Panc1 (cell line): ENCODE measurements at regions of chr6 and their contacts with region 1.

Region 1: GRCh38 chr6:165135889-165136288 is 173.5 kb downstream of the C6orf118 start:
- DNase-seq: no peak
- ATAC-seq: no peak
- H3K4me3 ChIP-seq: no peak overlapping the region
- H3K27ac ChIP-seq: no peak overlapping the region
- H3K4me1 ChIP-seq: no peaks in the 10 kb centered on the region
- H3K27me3 ChIP-seq: no peaks in the 10 kb centered on the region
- CTCF ChIP-seq: no peak

Region 2: GRCh38 chr6:165117121-165117520 is 18.8 kb before region 1 on chr6:
- CTCF ChIA-PET with region 1: interaction called, 11 read pairs
- POLR2A ChIA-PET with region 1: no interaction called
- in situ Hi-C with region 1: no loop called
- intact Hi-C with region 1: no loop called
- DNase-seq: no peak
- ATAC-seq: no peak
- H3K4me3 ChIP-seq: no peak overlapping the region
- H3K27ac ChIP-seq: no peak overlapping the region
- H3K4me1 ChIP-seq: no peaks in the 10 kb centered on the region
- H3K27me3 ChIP-seq: no peaks in the 10 kb centered on the region
- CTCF ChIP-seq: no peak

Region 3: GRCh38 chr6:165191461-165191860 is 55.6 kb after region 1 on chr6:
- CTCF ChIA-PET with region 1: no interaction called
- POLR2A ChIA-PET with region 1: no interaction called
- in situ Hi-C with region 1: no loop called
- intact Hi-C with region 1: no loop called
- DNase-seq: no peak
- ATAC-seq: no peak
- H3K4me3 ChIP-seq: no peak overlapping the region
- H3K27ac ChIP-seq: no peak overlapping the region
- H3K4me1 ChIP-seq: no peaks in the 10 kb centered on the region
- H3K27me3 ChIP-seq: no peaks in the 10 kb centered on the region
- CTCF ChIP-seq: no peak

Region 4: DNA sequence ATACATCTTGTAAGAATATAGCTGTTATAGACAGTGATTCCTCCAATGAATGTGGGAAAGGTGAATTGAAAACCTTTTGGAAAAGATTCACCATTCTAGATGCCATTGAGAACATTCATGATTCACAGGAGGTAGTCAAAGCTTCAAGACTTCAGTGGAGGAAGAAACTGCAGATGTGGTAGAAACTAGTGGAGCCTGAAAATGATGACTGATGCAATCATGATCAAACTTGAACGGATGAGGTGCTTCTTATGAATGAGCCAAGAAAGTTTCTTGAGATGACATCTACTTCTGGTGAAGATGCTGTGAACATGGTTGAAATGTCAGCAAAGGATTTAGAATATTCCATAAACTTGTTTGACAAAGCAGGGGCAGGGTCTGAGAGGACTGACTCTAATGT is 240.2 kb after region 1 on chr6:
- CTCF ChIA-PET with region 1: no interaction called
- POLR2A ChIA-PET with region 1: no interaction called
- in situ Hi-C with region 1: no loop called
- intact Hi-C with region 1: no loop called
- DNase-seq: no peak
- ATAC-seq: no peak
- H3K4me3 ChIP-seq: no peak overlapping the region
- H3K27ac ChIP-seq: no peak overlapping the region
- H3K4me1 ChIP-seq: no peaks in the 10 kb centered on the region
- H3K27me3 ChIP-seq: no peaks in the 10 kb centered on the region
- CTCF ChIP-seq: no peak